Activated CD4-positive, alpha-beta T cell treated with anti-CD3 and anti-CD28 coated beads, Interleukin-2, amount 10 ng/mL, durations not matched to agents 24 days and 14 days (primary cell): ENCODE measurements at regions of chr4 and their contacts with region 1.

Region 1: DNA sequence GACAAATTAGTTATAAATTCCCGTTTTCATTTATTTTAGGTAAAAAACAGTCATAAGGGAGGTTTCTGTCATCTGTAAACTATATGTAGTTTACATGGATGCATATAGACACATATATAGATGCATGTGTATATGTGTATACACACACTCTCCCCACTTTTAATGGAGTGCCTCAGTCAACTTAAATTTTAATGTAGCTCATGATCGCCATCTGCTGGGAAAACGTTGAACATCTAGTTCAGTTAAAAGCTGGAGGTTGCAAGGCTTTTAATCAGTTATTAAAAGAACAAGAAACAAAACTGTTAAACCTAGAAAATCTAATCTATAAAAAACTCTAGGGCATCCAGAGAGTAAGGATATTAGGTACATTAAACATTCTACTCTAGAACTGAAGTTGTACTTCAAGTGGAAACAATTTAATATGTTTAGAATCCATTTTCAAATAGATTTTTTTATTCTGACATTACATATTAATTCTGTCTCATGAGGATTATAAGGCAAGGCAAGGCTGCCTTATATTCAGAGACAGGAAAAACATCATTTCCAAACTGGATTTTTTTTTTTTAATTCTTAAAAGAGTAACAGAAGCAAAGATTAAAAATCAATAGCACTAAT is 122.6 kb downstream of the SHISA3 start:
- DNase-seq: peak; percentile 87
- H3K4me3 Mint-ChIP-seq: no peak overlapping the region
- H3K27ac Mint-ChIP-seq: no peak overlapping the region
- H3K4me1 Mint-ChIP-seq: no peaks in the 10 kb centered on the region
- H3K27me3 Mint-ChIP-seq: no peaks in the 10 kb centered on the region

Region 2: GRCh38 chr4:42119886-42120285 is 400.0 kb before region 1 on chr4:
- intact Hi-C with region 1: no loop called
- DNase-seq: no peak
- H3K4me3 Mint-ChIP-seq: no peak overlapping the region
- H3K27ac Mint-ChIP-seq: no peak overlapping the region
- H3K4me1 Mint-ChIP-seq: no peaks in the 10 kb centered on the region
- H3K27me3 Mint-ChIP-seq: peaks cover 5% of the 10 kb centered on the region

Region 3: GRCh38 chr4:42282081-42282901 is 237.6 kb before region 1 on chr4:
- intact Hi-C with region 1: loop called (anchors 1 kb)
- DNase-seq: peak; percentile 84
- H3K4me3 Mint-ChIP-seq: no peak overlapping the region
- H3K27ac Mint-ChIP-seq: no peak overlapping the region
- H3K4me1 Mint-ChIP-seq: peaks cover 2% of the 10 kb centered on the region
- H3K27me3 Mint-ChIP-seq: no peaks in the 10 kb centered on the region

Region 4: DNA sequence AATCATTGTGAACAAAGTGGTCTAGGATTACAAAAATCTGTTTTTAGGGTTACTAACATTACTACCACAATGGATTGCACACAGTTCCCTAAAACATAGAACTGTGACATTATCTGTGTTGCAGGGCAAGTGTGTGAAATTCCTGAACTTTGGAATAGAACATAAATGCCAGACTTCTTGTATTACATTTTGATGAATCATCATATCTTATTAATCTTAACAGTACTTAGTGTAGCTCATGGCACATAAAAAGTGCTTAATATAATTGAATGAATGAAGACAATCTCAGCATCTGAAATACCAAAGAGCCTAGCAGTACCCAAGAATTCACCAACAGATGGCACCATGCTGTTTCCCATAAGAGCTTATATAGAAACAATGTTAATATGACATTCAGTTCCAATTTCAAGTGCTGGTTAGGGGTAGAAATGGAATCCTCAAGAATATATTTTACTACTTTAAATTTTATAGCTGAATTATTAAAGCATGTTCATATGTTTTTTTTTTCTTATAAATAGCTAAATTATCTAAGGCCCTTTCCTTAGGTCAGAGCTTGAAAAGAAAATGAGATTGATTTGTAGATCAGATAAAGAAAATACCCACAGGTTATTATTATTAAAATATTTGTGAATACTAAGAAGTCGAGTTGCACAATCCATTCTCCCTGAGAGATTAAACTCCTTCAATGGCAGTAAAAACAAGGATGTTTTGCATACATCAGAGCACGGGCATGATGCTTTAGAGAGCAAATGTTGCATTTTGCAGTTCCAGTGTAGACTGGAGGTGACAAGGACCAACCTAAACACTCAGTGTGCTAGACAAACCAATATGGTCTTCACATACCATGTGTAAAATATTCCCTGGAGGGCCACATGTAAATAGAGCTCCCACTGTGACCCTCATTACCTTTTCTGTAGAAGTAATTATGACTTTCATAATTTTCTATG is 148.3 kb before region 1 on chr4:
- intact Hi-C with region 1: loop called (anchors 2 kb)
- DNase-seq: peak; percentile 59
- H3K4me3 Mint-ChIP-seq: no peak overlapping the region
- H3K27ac Mint-ChIP-seq: no peak overlapping the region
- H3K4me1 Mint-ChIP-seq: no peaks in the 10 kb centered on the region
- H3K27me3 Mint-ChIP-seq: peaks cover 7% of the 10 kb centered on the region